ENCODE measurements at regions of chr6 and their contacts with region 1.

Region 1: DNA sequence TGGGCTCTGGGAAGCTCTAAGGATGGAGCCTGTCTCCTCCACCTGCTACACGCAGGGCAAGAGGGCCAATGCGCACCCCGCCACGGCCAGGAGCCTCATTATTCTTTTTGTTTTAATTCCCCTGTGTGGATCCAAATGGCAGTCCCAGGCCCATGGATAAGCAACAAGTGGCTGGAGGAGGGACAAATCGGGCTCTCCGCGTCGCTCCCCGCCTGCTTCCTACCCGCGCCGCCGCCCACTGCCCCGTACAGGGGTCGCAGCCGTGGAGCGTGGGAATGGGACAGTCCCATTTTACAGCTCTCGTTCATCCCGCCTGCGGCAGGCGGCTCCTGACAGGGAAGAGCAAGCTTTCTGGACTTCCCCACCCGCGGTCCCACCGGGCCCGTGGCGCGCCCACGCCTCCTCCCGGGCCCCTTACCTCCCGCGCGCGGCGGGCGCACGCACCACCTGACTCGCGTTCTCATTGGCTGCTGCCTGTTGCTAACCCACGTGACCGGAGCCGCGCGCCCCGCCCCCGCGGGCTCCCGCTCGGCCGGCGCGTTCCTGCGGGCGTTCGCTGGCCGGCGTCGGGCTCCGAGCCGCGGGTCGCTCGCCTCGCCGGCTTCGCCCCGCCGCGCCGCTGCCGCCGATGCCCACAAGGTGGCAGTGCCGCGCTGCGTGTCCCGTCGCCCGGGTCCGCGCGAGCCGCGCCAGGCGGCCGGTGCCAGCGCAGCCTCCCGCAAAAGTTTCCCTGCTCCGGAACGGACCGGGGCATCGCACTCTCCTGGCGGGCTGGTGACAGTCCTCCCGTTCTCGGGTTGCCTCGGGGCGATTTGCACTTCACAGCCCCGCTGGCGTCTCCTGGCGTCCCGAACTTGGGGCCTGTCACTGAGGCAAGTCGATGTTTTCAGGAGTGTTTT is 93.3 kb downstream of the CD83 start:
- ATAC-seq: peak; percentile 90 to 97 (median 94)
- H3K4me3 ChIP-seq: peak overlapping the region; percentile 38 to 60 (median 56)
- H3K27ac ChIP-seq: no peak overlapping the region
- H3K4me1 ChIP-seq: peaks cover 10 to 16% of the 10 kb centered on the region in 2 donors

Region 2: GRCh38 chr6:13511913-13512717 is 698.8 kb before region 1 on chr6:
- in situ Hi-C with region 1: no loop called
- ATAC-seq: no peak
- H3K4me3 ChIP-seq: no peak overlapping the region
- H3K27ac ChIP-seq: no peak overlapping the region
- H3K4me1 ChIP-seq: no peaks in the 10 kb centered on the region

Region 3: DNA sequence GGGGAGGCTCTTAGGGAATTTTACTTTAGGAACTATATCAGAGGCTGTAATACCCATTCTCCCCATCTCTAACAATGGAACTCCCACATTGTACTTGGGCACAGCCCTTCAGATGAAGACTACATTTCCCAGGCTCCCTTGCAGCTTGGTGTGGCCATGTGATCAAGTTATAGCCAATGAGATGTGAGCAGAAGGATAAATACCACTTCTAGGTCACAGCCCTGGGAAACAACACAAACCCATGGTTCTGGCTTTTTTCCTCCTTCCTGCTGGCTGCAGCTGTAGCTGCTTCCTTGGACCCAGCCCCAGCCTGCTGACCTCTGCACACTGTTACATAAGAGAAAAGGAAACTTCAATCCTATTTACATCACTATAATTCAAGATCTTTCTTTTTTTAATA is 589.0 kb after region 1 on chr6:
- in situ Hi-C with region 1: loop called in 1 of 9 experiments (anchors 25 kb)
- ATAC-seq: peak in 6 of 8 experiments; percentile 11 to 94 (median 89)
- H3K4me3 ChIP-seq: no peak overlapping the region
- H3K27ac ChIP-seq: no peak overlapping the region
- H3K4me1 ChIP-seq: peaks cover 14 to 18% of the 10 kb centered on the region in 2 donors

Region 4: DNA sequence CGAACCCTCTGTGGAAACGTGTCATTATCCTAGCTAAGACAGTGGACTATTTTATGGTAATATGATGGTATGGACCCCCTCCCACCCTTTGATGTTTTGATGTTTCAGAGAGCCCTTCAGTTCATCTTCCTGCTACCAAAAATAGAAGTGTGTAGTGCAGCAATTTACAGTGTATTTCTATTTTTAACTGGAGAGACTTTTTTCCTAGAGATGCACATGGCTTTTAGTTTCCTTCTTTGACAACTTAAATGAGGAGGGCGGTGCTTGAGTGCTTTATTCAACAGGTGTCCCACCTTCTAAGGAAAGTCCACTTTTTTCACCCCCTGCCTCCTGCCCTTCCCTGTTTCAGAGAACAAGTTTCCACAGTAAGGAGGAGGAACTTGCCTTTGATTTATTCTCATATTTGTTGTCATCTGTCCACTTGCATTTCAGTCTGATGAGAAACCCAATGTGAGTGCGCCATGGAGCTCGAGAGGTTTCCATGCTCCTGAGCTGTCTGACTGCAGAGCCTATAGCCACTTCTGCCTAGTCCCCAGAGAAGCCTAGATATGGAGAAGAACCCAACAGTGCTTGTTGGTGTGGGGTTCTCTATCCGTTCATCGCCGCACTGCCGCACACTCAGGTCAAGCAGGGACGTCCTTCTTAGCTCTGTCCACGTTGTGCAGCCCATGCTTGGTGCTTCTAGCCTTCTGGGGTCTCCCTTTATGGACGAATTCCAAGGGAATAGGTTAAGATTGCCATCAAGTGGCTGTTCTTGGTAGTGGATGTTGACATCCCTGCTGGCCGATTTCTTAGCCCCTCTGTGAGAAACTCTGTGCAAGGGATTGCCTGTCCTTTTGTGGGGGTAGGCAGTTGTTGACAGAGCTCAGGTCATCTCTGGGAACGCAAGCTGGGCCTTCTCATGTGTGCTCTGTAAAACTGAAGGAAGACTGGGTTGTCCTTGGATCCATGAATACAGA is 1179.1 kb after region 1 on chr6:
- in situ Hi-C with region 1: loop called in 2 of 9 experiments (anchors 25 kb)
- ATAC-seq: peak in 6 of 8 experiments; percentile 63 to 85 (median 76)
- H3K4me3 ChIP-seq: no peak overlapping the region
- H3K27ac ChIP-seq: no peak overlapping the region
- H3K4me1 ChIP-seq: peaks cover 50 to 55% of the 10 kb centered on the region in 2 donors

Region 5: GRCh38 chr6:15491255-15491985 is 1280.5 kb after region 1 on chr6:
- in situ Hi-C with region 1: loop called in 1 of 9 experiments (anchors 25 kb)
- ATAC-seq: peak; percentile 65 to 95 (median 90)
- H3K4me3 ChIP-seq: no peak overlapping the region
- H3K27ac ChIP-seq: no peak overlapping the region
- H3K4me1 ChIP-seq: peaks cover 24 to 33% of the 10 kb centered on the region in 2 donors